ENCODE measurements at regions of chr7 and their contacts with region 1.

Region 1: GRCh38 chr7:107879400-107880035 is 11.5 kb upstream of the DLD start:
- DNase-seq: peak; percentile 61
- H3K4me3 Mint-ChIP-seq: no peak overlapping the region
- H3K27ac Mint-ChIP-seq: peak overlapping the region; percentile 19
- H3K4me1 Mint-ChIP-seq: peaks cover 32% of the 10 kb centered on the region
- H3K27me3 Mint-ChIP-seq: peaks cover 20% of the 10 kb centered on the region

Region 2: GRCh38 chr7:107462740-107463444 is 416.6 kb before region 1 on chr7:
- CTCF ChIA-PET with region 1: interaction called, 19 read pairs
- DNase-seq: peak; percentile 67
- H3K4me3 Mint-ChIP-seq: no peak overlapping the region
- H3K27ac Mint-ChIP-seq: no peak overlapping the region
- H3K4me1 Mint-ChIP-seq: no peaks in the 10 kb centered on the region
- H3K27me3 Mint-ChIP-seq: no peaks in the 10 kb centered on the region

Region 3: DNA sequence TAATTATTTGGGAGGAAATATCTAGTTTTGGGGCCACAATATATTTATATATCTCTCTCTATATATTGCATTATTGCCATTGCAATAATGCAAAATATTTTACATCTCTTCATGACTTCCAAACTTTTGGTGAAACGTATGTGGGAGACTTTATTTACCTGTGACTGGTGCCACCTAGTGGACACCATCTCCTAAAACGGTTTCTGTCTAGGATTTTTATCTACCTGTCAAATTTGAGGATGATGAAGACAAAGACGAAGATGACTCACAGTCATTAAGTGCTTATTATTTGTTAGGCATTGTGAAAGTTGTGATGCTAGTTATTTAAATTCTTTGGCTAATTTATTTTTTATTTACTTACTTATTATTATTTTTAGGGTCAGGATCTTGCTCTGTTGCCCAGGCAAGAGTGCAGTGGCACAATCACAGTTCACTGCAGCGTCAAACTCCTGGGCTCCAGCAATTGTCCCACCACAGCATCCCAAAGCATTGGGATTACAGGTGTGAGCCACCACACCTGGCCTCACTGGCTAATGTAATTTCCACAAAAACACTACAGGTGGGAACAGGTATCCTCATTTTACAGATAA is 154.3 kb before region 1 on chr7:
- CTCF ChIA-PET with region 1: interaction called, 16 read pairs
- DNase-seq: peak; percentile 61
- H3K4me3 Mint-ChIP-seq: no peak overlapping the region
- H3K27ac Mint-ChIP-seq: no peak overlapping the region
- H3K4me1 Mint-ChIP-seq: no peaks in the 10 kb centered on the region
- H3K27me3 Mint-ChIP-seq: peaks cover 20% of the 10 kb centered on the region

Region 4: GRCh38 chr7:107743567-107744344 is 135.8 kb before region 1 on chr7 and contains the start of gene CBLL1:
- CTCF ChIA-PET with region 1: interaction called, 176 read pairs
- DNase-seq: peak; percentile 98
- H3K4me3 Mint-ChIP-seq: peak within 1 kb of the TSS; percentile 87
- H3K27ac Mint-ChIP-seq: peak within 1 kb of the TSS; percentile 100
- H3K4me1 Mint-ChIP-seq: peaks cover 49% of the 10 kb centered on the region
- H3K27me3 Mint-ChIP-seq: no peaks in the 10 kb centered on the region

Region 5: GRCh38 chr7:107856806-107857540 is 22.5 kb before region 1 on chr7:
- CTCF ChIA-PET with region 1: interaction called, 10 read pairs
- DNase-seq: peak; percentile 68
- H3K4me3 Mint-ChIP-seq: peak overlapping the region; percentile 4
- H3K27ac Mint-ChIP-seq: peak overlapping the region; percentile 93
- H3K4me1 Mint-ChIP-seq: peaks cover 31% of the 10 kb centered on the region
- H3K27me3 Mint-ChIP-seq: peaks cover 16% of the 10 kb centered on the region

Region 6: GRCh38 chr7:107890962-107891635 is 11.6 kb after region 1 on chr7 and contains the start of gene DLD:
- CTCF ChIA-PET with region 1: interaction called, 24 read pairs
- DNase-seq: peak; percentile 96
- H3K4me3 Mint-ChIP-seq: peak within 1 kb of the TSS; percentile 96
- H3K27ac Mint-ChIP-seq: peak within 1 kb of the TSS; percentile 98
- H3K4me1 Mint-ChIP-seq: peaks cover 47% of the 10 kb centered on the region
- H3K27me3 Mint-ChIP-seq: no peaks in the 10 kb centered on the region

Region 7: DNA sequence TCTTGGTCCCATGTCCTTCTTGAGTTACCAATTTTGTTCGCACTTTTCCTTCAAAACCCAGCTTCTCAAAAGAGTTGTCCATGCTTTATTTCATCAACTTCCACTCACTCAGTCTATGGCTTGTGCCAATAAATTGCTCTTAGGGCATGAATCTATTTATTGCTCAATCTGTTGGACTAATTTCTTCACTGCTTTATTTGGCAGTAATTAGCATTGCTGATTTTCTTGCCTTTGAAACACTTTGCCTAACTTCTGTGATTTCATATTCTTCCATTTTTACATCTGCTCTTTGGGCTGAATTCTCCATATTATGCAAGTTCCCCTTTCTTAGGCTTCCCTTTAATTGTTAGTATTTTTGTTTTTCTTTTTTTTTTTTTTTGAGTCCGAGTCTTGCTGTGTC is 28.3 kb after region 1 on chr7:
- CTCF ChIA-PET with region 1: no interaction called
- DNase-seq: no peak
- H3K4me3 Mint-ChIP-seq: no peak overlapping the region
- H3K27ac Mint-ChIP-seq: no peak overlapping the region
- H3K4me1 Mint-ChIP-seq: no peaks in the 10 kb centered on the region
- H3K27me3 Mint-ChIP-seq: no peaks in the 10 kb centered on the region